ENCODE measurements at regions of chr2 and their contacts with region 1.

Region 1: GRCh38 chr2:97005352-97005751 is 19.0 kb upstream of the FAM178B start:
- DNase-seq: no peak
- H3K4me3 ChIP-seq: no peak overlapping the region
- H3K27ac ChIP-seq: no peak overlapping the region
- H3K4me1 ChIP-seq: no peaks in the 10 kb centered on the region
- H3K27me3 ChIP-seq: peaks cover 62% of the 10 kb centered on the region
- CTCF ChIP-seq: peak; percentile 67

Region 2: GRCh38 chr2:96977631-96978195 is 27.6 kb before region 1 on chr2:
- CTCF ChIA-PET with region 1: interaction called, 10 read pairs
- POLR2A ChIA-PET with region 1: interaction called, 8 read pairs
- intact Hi-C with region 1: no loop called
- DNase-seq: no peak
- H3K4me3 ChIP-seq: no peak overlapping the region
- H3K27ac ChIP-seq: no peak overlapping the region
- H3K4me1 ChIP-seq: no peaks in the 10 kb centered on the region
- H3K27me3 ChIP-seq: peaks cover 43% of the 10 kb centered on the region
- CTCF ChIP-seq: no peak